ENCODE measurements at regions of chr6 and their contacts with region 1.

Region 1: DNA sequence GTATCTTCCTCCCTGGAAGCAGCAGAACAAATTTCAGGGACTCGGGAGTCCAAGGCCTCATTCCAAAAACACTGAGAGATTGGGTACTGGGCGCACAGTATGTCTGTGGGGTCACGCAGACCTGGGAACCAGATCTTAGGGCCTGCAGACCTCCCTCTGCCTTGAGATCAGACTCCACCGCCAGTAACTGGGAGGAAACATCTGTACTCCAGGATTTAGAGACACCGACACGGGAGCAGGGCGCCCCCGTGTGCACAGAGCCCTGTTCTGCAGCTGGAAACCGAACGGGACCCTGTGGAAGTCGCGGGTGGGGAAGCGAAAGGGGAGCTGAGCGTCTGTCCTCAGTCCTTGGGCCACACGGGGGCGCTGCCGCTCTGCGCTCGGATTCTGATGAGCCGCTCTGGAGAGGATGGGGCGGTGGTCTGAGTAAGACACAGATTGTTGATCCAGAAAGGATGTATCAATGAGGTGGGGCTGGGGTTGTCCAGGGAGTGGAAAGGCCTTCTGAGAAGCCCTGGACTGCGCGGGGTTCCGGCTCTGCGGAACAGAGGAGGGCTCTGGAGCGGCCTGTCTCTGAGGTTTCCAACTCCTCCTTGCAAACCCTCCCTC is 35.7 kb upstream of the HLA-E start:
- DNase-seq: peak; percentile 91 to 94 (median 92)
- H3K4me3 ChIP-seq: no peak overlapping the region
- H3K27ac ChIP-seq: no peak overlapping the region
- H3K4me1 ChIP-seq: peaks cover 0 to 38% (median 34%) of the 10 kb centered on the region in 4 experiments
- H3K27me3 ChIP-seq: peaks cover 9 to 84% (median 57%) of the 10 kb centered on the region in 5 experiments

Region 2: DNA sequence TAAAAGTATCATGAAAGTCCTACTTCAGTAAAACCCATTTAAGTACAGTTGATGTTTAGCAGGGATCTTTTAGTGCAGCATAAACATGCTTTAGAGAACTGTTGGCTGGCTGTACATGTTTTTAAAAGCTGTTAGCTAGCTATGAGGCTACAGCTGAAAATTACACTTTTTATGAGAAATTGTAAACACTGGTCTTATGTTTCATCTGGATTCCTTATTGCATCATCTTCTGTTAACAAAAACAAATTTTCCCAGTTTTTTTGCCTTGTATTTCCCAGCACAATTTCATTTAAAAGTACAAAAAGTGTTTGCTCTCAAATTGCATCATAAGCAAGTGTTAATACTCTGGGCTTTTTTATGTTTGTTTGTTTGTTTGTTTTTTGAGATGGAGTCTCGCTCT is 17.4 kb after region 1 on chr6:
- CTCF ChIA-PET with region 1: interaction called, 14 read pairs
- POLR2A ChIA-PET with region 1: no interaction called
- DNase-seq: no peak
- H3K4me3 ChIP-seq: no peak overlapping the region
- H3K27ac ChIP-seq: no peak overlapping the region
- H3K4me1 ChIP-seq: peaks cover 0 to 9% (median 6%) of the 10 kb centered on the region in 4 experiments
- H3K27me3 ChIP-seq: peaks cover 26 to 75% (median 37%) of the 10 kb centered on the region in 5 experiments

Region 3: DNA sequence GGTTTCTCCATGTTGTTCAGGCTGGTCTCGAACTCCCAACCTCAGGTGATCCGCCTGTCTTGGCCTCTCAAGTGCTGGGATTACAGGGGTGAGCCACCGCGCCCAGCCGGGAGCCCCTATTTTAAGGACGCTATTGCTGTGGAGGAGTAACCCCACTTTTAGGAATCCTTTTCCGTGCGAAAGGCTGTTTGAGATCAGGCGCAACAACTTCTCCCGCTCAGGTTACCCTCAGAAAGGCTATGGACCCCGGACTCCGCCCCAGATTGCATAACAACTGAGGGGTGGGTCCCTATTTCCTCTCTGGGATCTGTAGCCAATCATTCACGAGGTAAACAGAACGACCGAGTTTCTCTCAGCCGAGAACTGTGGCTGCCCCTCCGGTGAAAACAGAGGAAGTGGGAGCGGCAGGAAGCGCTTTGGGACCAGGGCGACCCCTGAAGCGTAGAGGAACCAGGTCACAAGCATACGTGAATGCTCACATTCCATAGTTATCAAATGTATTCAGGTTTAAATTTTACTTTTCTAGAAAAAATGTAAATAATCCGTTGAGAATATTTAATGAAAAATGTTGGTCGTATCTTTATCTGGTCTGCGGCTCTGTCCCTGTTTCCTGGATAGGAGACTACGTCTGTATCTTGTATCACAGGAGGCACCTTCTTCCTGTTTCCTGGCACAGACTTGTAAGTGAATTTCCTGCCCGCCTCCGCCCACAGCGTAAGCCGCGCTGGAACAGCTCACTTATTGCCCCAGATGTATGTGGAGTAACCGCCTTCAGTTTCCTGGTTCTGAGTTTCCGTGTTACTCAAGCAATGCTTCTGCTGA is 62.5 kb after region 1 on chr6:
- CTCF ChIA-PET with region 1: no interaction called
- POLR2A ChIA-PET with region 1: no interaction called
- DNase-seq: peak; percentile 100
- H3K4me3 ChIP-seq: peak overlapping the region; percentile 14 to 76 (median 53)
- H3K27ac ChIP-seq: peak overlapping the region; percentile 98 to 99
- H3K4me1 ChIP-seq: peaks cover 8 to 62% (median 44%) of the 10 kb centered on the region in 4 experiments
- H3K27me3 ChIP-seq: no peaks in the 10 kb centered on the region

Measured in common myeloid progenitor, CD34-positive (primary cell).